ENCODE measurements at regions of chr19 and their contacts with region 1.

Region 1: GRCh38 chr19:33143897-33144405 is 12.0 kb downstream of the WDR88 start:
- DNase-seq: peak; percentile 75
- ATAC-seq: peak; percentile 98
- H3K4me3 Mint-ChIP-seq: no peak overlapping the region
- H3K27ac Mint-ChIP-seq: no peak overlapping the region
- H3K4me1 Mint-ChIP-seq: peaks cover 7% of the 10 kb centered on the region
- H3K27me3 Mint-ChIP-seq: peaks cover 9% of the 10 kb centered on the region

Region 2: DNA sequence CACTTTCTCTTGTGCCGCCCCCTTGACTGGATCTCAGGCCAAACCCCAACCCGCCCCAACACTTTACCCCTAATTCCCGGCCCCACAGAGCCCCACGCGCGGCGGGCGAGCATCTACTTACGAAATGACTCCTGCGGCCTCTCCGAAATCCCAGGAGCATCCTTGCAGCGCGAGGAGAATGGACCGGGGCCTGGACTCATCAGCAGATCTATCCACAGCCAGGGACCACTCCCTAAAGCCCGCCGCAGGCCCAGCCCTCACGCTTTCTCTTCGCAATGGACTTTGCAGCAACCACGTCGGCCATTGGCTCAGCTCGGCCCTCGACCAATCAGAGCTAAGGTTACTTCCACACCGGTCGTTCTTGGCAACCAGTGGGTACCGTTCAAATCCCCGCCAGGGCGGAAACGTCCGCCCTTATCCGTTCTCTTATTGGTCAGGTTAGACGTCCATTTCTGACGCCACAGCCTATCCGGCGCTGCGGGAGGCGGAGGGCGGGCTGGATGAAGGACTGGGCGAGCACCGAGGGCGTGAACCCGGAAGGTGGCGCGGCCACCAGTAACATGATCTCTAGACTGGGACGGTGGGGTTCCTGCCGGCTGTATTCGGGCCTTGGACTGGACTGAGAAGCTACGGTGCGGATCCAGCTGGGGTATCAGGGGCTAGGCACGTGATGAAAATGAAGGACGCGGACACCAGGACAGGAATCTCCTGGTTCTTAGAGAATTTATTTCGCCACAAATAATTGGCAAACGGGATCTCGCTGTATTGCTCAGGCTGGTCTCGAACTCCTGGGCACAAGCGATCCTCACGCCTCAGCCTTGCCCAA is 172.0 kb before region 1 on chr19 and contains the starts of genes CEP89 and FAAP24:
- CTCF ChIA-PET with region 1: no interaction called
- POLR2A ChIA-PET with region 1: no interaction called
- DNase-seq: peak; percentile 99
- ATAC-seq: peak; percentile 99
- H3K4me3 Mint-ChIP-seq: peak within 1 kb of the TSS; percentile 97
- H3K27ac Mint-ChIP-seq: peak within 1 kb of the TSS; percentile 95
- H3K4me1 Mint-ChIP-seq: peaks cover 20% of the 10 kb centered on the region
- H3K27me3 Mint-ChIP-seq: no peaks in the 10 kb centered on the region
- total RNA-seq, gene CEP89: 20.0 to 23.2 TPM
- total RNA-seq, gene FAAP24: 8.8 to 8.9 TPM

Region 3: DNA sequence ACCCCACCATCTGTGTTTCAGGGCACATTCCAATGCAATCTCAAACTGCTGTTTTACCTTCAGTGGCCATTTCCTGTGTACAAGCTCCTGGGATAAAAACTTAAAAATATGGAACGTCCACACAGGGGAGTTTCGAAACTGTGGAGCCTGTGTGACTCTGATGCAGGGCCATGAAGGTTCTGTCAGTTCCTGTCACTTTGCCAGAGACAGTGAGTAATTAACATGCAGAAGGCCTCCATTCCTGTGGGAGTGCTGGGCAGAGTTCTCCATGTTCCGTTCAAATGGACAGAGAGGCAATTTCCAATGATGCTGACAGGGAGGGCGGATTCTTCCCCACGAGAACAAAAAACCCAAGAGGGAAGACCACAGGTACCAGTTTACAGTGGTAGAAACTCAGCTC is 12.4 kb after region 1 on chr19:
- CTCF ChIA-PET with region 1: interaction called, 10 read pairs
- POLR2A ChIA-PET with region 1: no interaction called
- DNase-seq: no peak
- ATAC-seq: no peak
- H3K4me3 Mint-ChIP-seq: no peak overlapping the region
- H3K27ac Mint-ChIP-seq: no peak overlapping the region
- H3K4me1 Mint-ChIP-seq: peaks cover 38% of the 10 kb centered on the region
- H3K27me3 Mint-ChIP-seq: peaks cover 7% of the 10 kb centered on the region

Region 4: DNA sequence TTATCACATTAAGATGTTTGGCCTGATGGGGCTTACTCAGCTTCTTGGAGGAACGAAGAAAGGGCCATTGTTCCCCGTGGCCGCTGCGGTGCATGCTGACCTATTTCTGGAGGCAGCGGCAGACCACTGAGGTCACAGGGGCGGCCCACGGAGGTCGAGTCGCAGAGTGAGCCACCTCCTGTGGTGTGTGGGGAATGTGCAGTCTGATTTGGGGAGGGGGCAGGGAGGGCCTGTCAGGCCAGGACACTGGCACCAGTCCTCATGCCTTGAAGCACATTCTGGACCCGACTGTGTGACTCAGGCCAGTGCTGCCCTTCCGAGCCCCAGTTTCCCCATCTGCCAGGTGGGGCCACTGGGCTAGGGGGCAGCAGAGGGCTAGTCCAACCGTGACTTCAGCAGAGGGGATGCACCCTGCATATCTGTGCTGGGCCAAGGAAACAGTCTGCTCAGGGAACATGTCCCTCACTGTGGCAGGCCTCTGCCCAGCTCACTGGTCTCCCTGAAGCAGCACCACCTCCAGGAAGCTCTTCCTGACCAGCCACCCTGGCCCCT is 75.4 kb after region 1 on chr19:
- CTCF ChIA-PET with region 1: no interaction called
- POLR2A ChIA-PET with region 1: no interaction called
- DNase-seq: no peak
- ATAC-seq: no peak
- H3K4me3 Mint-ChIP-seq: no peak overlapping the region
- H3K27ac Mint-ChIP-seq: no peak overlapping the region
- H3K4me1 Mint-ChIP-seq: no peaks in the 10 kb centered on the region
- H3K27me3 Mint-ChIP-seq: peaks cover 11% of the 10 kb centered on the region